Activated naive CD8-positive, alpha-beta T cell treated with anti-CD3 and anti-CD28 coated beads, Interleukin-2, amount 10 ng/mL, durations not matched to agents 7 days and 5 days (primary cell): ENCODE measurements at regions of chr6 and their contacts with region 1.

Region 1: DNA sequence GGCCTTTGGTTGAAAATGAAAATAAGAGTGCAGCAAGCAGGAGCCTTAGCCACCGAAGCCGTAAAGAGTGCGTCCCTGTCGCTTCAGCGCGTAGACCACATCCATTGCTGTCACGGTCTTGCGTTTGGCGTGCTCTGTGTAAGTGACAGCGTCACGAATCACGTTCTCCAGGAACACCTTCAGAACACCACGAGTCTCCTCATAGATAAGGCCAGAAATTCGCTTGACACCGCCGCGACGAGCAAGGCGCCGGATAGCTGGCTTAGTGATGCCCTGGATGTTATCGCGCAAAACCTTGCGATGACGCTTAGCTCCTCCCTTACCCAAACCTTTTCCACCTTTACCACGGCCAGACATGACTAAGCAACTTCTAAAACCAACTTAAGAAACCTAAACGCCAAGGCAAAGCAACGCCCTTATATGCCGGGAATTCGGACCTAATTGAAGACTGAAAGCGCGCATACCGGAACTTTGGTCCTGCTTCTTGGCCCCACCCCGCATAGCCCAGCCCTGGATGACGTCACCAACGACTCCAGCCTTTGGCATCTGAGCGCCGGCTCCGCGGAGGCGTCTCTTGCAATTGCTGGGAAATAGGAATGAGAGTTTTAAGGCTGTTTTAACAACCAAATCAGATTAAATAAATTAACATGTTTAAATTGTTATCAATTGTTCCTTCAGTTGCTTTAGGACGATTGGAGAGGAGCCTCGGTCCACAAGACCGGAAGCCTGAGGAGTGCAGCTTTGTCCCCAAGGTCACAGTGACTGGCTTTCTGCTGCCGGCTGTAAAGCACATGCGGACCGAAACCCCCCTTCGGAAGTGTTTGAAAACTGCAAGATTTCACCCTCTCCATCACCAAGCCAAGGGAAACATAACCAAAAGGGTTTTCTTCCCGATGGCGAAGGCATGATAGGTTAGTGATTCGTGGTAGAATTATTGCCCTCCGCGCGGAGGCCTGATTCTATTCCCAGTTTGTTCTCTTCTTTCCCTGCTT is 79.6 kb upstream of the BTN3A2 start:
- DNase-seq: peak; percentile 87
- ATAC-seq: peak; percentile 79
- H3K4me3 Mint-ChIP-seq: peak overlapping the region; percentile 72
- H3K27ac Mint-ChIP-seq: peak overlapping the region; percentile 92
- H3K4me1 Mint-ChIP-seq: peaks cover 37% of the 10 kb centered on the region
- H3K27me3 Mint-ChIP-seq: peaks cover 3% of the 10 kb centered on the region

Region 2: DNA sequence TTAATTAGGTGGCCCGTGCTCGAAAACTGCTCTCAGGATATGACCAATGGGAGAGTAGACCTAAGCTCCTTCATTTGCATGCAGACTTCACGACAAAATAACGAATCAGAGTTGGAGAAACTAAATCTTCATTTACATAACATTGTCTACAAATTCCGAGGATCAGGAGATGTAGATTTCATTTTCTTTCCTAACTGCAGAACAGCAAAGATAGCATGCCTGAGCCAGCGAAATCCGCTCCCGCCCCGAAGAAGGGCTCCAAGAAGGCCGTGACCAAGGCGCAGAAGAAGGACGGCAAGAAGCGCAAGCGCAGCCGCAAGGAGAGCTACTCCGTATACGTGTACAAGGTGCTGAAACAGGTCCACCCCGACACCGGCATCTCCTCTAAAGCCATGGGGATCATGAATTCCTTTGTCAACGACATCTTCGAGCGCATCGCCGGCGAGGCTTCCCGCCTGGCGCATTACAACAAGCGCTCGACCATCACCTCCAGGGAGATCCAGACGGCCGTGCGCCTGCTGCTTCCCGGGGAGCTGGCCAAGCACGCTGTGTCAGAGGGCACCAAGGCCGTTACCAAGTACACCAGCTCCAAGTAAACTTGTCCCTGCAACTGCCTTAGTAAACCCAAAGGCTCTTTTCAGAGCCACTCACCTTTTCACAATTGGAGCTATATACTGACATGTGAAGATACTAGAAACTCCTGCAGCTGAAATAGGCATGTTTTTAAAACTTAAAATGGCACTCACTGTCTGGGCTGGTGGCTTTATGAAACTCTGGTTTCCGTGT is 101.7 kb before region 1 on chr6:
- POLR2A ChIA-PET with region 1: interaction called, 28 read pairs
- DNase-seq: peak; percentile 78
- ATAC-seq: peak; percentile 85
- H3K4me3 Mint-ChIP-seq: peak overlapping the region; percentile 96
- H3K27ac Mint-ChIP-seq: peak overlapping the region; percentile 99
- H3K4me1 Mint-ChIP-seq: peaks cover 48% of the 10 kb centered on the region
- H3K27me3 Mint-ChIP-seq: no peaks in the 10 kb centered on the region

Region 3: DNA sequence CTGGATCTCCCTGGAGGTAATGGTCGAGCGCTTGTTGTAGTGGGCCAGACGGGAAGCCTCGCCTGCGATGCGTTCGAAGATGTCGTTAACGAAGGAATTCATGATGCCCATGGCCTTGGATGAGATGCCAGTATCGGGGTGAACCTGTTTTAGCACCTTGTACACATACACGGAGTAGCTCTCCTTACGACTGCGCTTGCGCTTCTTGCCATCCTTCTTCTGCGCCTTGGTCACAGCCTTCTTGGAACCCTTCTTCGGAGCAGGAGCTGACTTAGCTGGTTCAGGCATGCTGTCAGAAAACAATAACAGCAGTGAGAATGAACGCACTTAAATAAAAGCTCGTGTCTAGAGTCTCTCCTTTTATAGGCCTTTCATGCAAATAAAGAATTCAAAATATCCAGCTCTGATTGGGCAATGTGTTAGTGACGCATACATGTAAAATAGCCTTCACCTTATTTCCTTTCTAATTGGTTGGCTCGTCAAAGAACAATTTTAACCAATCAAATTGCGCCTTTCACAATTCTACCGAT is 69.0 kb before region 1 on chr6:
- POLR2A ChIA-PET with region 1: interaction called, 57 read pairs
- DNase-seq: peak; percentile 77
- ATAC-seq: peak; percentile 75
- H3K4me3 Mint-ChIP-seq: no peak overlapping the region
- H3K27ac Mint-ChIP-seq: no peak overlapping the region
- H3K4me1 Mint-ChIP-seq: peaks cover 32% of the 10 kb centered on the region
- H3K27me3 Mint-ChIP-seq: no peaks in the 10 kb centered on the region

Region 4: DNA sequence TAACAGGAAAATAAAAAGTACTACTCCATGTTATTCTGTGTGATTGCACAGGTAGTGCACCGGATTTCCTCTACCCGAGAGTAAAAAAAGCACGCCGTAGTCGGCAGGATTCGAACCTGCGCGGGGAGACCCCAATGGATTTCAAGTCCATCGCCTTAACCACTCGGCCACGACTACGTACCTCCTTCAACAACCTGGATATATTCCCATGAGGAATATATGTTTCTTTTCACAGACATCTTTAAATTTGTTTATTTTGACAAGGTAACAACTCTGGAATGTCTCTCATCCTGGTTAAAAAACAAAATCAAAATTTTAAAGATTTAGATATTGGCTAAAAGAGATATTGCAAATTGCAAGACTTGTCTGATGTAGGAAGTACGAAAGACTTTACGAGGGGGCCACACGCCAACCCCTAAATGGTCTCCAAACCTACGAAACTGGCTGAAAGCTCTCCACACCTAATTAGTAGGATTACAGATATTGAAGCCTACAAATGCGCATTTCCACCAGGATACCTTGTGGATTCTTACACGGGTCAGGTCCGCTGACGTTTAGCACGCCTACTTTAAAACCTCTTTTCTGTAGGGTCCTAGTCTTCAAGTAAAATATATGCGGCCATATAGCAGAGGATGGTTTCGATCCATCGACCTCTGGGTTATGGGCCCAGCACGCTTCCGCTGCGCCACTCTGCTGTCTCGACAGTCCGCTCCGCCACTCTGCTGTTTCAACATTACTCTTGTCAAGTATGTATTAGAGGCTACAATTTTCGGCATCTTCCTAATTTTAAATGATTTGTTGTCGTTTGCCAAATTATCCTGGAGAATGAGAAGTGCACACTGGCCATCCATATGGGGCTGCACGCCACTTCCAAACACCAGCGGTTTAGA is 27.3 kb after region 1 on chr6:
- POLR2A ChIA-PET with region 1: interaction called, 23 read pairs
- DNase-seq: peak; percentile 76
- ATAC-seq: peak; percentile 78
- H3K4me3 Mint-ChIP-seq: peak overlapping the region; percentile 76
- H3K27ac Mint-ChIP-seq: peak overlapping the region; percentile 77
- H3K4me1 Mint-ChIP-seq: peaks cover 34% of the 10 kb centered on the region
- H3K27me3 Mint-ChIP-seq: no peaks in the 10 kb centered on the region

Region 5: DNA sequence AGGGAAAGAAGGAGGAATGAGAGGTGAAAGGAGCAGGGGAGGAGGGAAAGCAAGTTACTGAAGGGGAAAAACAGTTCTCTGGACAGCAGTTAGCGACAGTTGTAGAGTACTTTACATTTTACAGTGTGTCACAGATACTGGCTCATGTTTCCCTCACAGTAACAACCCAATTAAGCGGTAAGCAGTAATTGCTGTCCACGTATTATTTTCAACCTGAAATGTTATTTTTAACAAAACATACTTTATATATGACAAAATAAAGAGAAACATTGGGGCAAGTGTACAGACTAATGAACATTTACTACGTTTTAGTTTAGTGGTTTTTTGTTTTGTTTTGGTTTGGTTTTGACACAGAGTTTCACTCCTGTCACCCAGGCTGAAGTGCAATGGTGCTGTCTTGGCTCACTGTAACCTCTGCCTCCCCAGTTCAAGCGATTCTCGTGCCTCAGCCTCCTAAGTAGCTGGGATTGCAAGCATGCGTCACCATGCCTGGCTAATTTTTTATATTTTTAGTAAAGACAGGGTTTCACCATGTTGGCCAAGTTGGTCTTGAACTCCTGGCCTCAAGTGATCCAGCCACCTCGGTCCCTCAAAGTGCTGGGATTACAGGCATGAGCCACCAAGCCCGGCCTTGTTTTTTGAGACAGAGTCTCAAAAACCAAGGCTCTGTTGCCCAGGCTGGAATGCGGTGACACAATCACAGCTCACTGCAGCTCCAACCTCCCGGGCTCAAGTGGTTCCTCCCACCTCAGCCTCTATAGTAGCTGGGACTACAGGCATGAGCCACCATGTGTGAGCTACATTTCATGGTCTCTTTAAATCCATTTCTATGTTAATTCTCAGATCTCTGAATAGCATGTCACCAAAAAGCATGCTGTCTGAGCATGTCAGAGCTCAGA is 56.9 kb after region 1 on chr6:
- POLR2A ChIA-PET with region 1: no interaction called
- DNase-seq: no peak
- ATAC-seq: peak; percentile 32
- H3K4me3 Mint-ChIP-seq: peak overlapping the region; percentile 85
- H3K27ac Mint-ChIP-seq: peak overlapping the region; percentile 67
- H3K4me1 Mint-ChIP-seq: peaks cover 20% of the 10 kb centered on the region
- H3K27me3 Mint-ChIP-seq: peaks cover 9% of the 10 kb centered on the region

Region 6: DNA sequence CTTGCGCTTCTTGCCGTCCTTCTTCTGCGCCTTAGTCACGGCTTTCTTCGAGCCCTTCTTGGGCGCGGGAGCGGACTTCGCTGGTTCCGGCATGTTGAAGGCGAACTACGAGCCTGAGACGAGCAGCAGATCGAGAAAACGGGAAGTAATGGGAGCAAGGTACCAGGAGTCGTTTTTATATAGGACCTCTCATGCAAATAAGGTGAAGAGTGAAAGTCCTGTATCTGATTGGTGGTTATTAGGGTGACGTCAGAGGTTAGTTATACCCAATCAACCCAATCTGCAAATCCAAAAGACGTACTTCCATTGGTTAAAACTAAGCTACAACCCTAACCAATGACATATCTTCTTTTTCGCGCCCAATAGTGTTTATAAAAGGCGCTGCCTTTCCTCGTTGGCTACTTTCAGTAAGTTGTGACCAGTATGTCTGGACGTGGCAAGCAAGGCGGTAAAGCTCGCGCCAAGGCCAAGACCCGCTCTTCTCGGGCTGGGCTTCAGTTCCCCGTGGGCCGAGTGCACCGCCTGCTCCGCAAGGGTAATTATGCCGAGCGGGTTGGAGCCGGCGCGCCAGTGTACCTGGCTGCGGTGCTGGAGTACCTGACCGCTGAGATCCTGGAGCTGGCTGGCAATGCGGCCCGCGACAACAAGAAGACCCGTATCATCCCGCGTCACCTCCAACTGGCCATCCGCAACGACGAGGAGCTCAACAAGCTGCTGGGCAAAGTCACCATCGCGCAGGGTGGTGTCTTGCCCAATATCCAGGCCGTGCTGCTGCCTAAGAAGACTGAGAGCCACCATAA is 861.5 kb after region 1 on chr6:
- POLR2A ChIA-PET with region 1: interaction called, 28 read pairs
- DNase-seq: peak; percentile 83
- ATAC-seq: peak; percentile 71
- H3K4me3 Mint-ChIP-seq: no peak overlapping the region
- H3K27ac Mint-ChIP-seq: no peak overlapping the region
- H3K4me1 Mint-ChIP-seq: peaks cover 18% of the 10 kb centered on the region
- H3K27me3 Mint-ChIP-seq: no peaks in the 10 kb centered on the region

Region 7: GRCh38 chr6:28153546-28153945 is 1868.1 kb after region 1 on chr6:
- POLR2A ChIA-PET with region 1: no interaction called
- DNase-seq: no peak
- ATAC-seq: no peak
- H3K4me3 Mint-ChIP-seq: no peak overlapping the region
- H3K27ac Mint-ChIP-seq: no peak overlapping the region
- H3K4me1 Mint-ChIP-seq: no peaks in the 10 kb centered on the region
- H3K27me3 Mint-ChIP-seq: no peaks in the 10 kb centered on the region